ENCODE measurements at regions of chr3 and their contacts with region 1.

Region 1: DNA sequence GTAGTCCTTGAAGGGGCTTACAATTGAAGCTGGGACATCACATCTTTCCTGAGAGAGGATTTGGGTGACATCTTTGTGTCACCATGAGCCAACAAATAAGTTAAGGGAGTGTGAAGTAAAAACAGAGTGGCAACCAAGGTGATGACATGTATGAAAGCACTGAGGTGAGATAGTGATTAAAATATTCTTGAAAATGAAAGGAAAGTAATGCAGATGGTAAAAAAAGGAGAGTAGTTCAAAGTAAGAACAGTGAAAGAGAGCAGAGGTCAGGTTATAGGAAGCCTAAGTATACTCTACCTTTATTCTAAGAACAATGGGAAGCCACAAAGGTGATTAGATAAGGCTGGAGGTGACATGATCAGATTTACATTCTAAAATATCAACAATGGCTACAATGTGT is 486.1 kb downstream of the DIPK2A start:
- DNase-seq: no peak
- ATAC-seq: no peak

Region 2: DNA sequence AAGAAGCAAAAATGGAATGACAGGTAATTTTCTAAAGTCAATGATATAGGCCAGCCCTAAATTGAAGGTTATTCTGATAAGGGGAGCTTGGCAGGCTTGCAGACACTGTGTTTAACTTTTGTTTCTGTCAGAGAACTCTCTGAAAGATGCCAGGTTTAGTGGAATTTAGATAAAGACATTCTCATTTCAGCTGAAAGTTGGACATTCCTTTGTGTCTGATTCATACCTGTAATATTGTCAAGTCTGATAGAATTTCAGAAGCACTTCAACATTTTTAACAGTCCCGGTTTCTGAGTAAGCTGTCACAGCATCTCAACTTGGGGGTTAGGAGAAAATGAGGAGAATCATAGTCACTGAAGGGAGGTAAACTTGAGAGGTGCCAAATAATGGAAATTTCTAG is 402.2 kb before region 1 on chr3:
- intact Hi-C with region 1: loop called (anchors 5 kb)
- DNase-seq: no peak
- ATAC-seq: no peak

Region 3: GRCh38 chr3:145842302-145842902 is 1384.6 kb after region 1 on chr3:
- intact Hi-C with region 1: no loop called
- DNase-seq: no peak
- ATAC-seq: no peak

Measured in left ventricle myocardium superior (tissue), 1 donor.